Cardiac septum (tissue), 1 donor: ENCODE measurements at regions of chr1 and their contacts with region 1.

Region 1: DNA sequence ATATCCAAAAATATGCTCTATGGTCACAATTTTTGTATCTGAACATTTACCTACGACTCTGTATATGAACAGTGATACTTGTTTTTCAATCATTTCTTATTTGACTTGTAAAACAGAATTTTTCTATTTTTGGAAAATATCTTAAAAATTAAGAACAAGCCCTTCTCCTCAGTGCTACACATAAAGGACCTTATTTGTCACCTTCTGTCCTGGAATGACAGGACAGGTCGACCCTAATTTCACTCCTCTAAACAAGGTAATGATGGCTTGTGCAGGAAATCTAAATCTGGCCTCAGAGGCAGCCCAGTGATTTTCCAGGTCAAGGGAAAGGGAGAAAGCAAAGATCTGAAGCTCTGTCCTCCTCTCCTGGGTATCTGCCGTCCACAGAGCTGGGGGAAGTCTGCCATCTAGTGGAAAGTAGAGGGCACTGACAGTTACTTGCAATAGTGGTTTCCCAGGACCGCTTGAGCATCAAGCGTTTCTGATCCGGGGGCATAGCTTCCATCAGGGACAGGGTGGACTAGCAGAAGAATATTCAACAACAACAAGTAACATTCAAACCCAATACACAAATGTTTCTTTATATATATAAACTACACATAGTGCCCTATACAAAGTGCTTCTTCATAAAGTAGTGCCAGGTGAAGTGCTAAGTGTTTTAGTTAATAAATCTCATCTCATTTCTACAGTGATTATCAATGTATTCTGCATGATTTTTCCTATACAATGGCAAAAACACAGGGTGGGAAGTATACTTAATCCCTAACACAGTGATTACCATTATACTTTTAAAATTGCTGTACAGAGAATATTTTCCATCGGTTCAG is 74.6 kb downstream of the SLC25A24 start:
- DNase-seq: peak; percentile 86

Region 2: DNA sequence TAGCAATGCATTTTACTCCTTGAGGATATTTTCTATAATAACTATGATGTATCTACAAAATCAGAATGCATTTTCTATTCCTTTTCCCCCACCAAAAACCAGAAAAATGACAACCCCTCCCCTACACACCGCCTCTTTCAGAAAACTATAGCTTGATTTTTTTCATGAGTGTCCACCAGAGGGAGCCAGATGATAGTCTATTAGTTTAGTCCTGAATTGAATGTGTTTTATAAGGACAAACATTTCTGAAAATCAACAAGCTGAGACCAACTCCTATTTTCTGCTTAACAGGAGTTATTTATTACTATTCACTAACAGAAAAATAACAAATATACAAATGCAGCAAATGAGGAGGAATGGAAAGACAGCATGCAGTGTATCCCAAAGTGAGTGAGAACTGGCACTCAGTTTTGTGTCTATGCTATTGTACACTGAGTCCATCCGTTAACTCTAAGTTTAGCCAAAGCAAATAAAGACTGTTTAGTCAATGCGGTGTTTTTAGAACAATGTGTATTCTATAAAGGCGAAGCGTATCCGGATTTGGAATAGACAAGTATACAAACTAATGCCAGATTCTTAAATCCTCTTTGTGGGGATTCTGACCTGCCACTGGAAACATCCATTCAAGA is 343.2 kb before region 1 on chr1:
- intact Hi-C with region 1: loop called (anchors 1 kb)
- DNase-seq: no peak

Region 3: DNA sequence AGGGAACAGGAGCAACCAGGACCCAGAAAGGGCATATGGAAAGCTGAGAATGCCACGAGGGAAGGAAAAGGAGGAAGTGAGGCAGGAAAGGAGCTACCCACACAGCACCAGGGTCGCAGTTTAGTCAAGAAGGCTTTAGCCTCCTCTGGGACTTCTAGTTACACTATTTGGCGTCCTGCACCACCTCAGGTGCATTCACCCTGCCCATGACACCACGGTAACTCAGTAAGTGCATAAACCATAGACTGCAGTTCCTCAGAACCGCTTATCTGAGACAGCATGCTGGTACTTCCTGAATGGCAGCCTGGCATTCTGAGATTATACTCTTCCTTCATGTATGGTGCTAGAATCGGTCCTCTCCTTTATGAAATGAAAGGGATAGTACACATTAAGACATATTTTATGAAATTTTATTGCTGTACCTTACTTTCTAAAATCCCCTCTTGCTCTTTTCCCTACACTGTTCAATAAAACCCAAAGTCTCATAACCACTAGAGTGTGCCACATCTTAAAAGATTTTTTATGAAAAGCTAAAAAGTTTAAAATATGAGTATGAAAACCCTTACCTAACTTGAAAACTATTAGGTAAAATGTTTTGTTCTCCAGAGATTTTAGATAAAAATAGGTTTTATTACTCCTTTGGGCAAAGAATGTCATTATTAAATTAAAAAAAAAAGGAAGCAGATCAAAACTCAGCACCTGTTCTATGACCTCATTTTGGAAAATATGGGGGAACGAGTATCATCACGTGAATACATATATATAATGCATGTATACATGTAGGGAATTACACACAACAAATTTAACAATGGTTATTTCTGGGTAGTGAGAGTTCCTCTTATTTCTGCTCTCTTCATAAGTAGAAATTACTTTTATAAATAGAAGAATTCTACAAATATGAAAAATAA is 227.8 kb before region 1 on chr1:
- intact Hi-C with region 1: no loop called
- DNase-seq: no peak

Region 4: GRCh38 chr1:107972391-107973180 is 152.9 kb before region 1 on chr1:
- intact Hi-C with region 1: loop called (anchors 5 kb)
- DNase-seq: no peak

Region 5: GRCh38 chr1:108049178-108049819 is 76.2 kb before region 1 on chr1:
- intact Hi-C with region 1: loop called (anchors 5 kb)
- DNase-seq: no peak